Endothelial cell of umbilical vein (primary cell): ENCODE measurements at regions of chr2 and their contacts with region 1.

Region 1: GRCh38 chr2:173210270-173211196 is 134.9 kb downstream of the MAP3K20 start:
- DNase-seq: peak; percentile 87
- H3K4me3 ChIP-seq: no peak overlapping the region
- H3K27ac ChIP-seq: no peak overlapping the region
- H3K4me1 ChIP-seq: no peaks in the 10 kb centered on the region
- H3K27me3 ChIP-seq: no peaks in the 10 kb centered on the region
- CTCF ChIP-seq: peak; percentile 71 to 80
- POLR2A ChIP-seq: no peak

Region 2: GRCh38 chr2:172813314-172813888 is 397.1 kb before region 1 on chr2:
- CTCF ChIA-PET with region 1: interaction called, 21 read pairs
- POLR2A ChIA-PET with region 1: no interaction called
- dilution Hi-C with region 1: no loop called
- intact Hi-C with region 1: no loop called
- DNase-seq: peak; percentile 68
- H3K4me3 ChIP-seq: no peak overlapping the region
- H3K27ac ChIP-seq: no peak overlapping the region
- H3K4me1 ChIP-seq: no peaks in the 10 kb centered on the region
- H3K27me3 ChIP-seq: peaks cover 0 to 2% of the 10 kb centered on the region in 2 experiments
- CTCF ChIP-seq: peak in 1 of 2 donors; percentile 37
- POLR2A ChIP-seq: no peak

Region 3: GRCh38 chr2:173021939-173022371 is 188.6 kb before region 1 on chr2:
- CTCF ChIA-PET with region 1: interaction called, 493 read pairs
- POLR2A ChIA-PET with region 1: no interaction called
- dilution Hi-C with region 1: loop called (anchors 25 kb)
- intact Hi-C with region 1: loop called (anchors 1 kb)
- DNase-seq: peak; percentile 18
- H3K4me3 ChIP-seq: no peak overlapping the region
- H3K27ac ChIP-seq: no peak overlapping the region
- H3K4me1 ChIP-seq: no peaks in the 10 kb centered on the region
- H3K27me3 ChIP-seq: peaks cover 0 to 2% of the 10 kb centered on the region in 2 experiments
- CTCF ChIP-seq: peak; percentile 8 to 23
- POLR2A ChIP-seq: no peak

Region 4: DNA sequence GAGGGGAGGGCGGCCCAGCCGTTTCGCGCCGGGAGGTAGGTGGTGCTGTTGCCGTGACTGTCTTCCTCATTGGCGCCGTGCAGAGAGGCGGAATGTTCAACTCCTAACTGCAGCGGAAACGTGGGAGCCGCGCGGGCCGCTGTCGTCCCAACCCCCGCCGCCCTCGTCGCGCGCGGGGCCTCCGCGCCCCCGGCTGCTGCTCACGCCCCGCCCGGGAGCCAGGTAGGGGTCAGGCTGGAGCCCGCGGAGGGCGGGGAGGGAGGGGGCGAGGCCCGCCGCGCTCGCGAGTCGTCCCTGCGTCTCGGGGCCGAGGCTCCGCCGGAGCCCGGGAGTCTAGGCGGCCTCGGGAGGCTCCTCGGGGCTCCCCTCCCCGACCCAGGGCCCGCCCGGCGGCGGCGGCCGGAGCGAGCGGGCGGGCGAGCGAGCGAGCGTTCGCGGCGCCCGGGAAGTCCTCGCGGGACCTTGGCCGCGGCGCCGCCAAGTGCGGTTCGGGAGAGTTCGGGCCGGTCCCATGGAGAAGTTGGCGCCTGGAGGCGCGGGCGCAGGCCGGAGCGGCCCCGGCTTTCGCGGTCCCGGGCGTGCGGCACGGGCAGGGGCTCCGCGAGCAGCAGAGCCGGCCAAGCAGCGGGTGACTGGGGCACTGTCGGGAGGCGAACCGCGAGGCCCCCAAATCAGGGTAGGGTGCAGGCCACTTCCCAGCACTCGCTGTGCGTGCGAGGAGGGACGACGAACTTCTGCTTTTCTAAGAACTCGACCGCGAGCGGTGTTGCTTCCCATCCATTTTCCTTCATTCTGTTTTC is 134.6 kb before region 1 on chr2 and contains the start of gene MAP3K20:
- CTCF ChIA-PET with region 1: interaction called, 23 read pairs
- POLR2A ChIA-PET with region 1: no interaction called
- dilution Hi-C with region 1: no loop called
- intact Hi-C with region 1: loop called (anchors 1 kb)
- DNase-seq: peak; percentile 70
- H3K4me3 ChIP-seq: peak within 1 kb of the TSS; percentile 54 to 86 (median 56)
- H3K27ac ChIP-seq: peak within 1 kb of the TSS; percentile 78
- H3K4me1 ChIP-seq: peaks cover 15% of the 10 kb centered on the region
- H3K27me3 ChIP-seq: no peaks in the 10 kb centered on the region
- CTCF ChIP-seq: peak; percentile 17 to 48
- POLR2A ChIP-seq: peak; percentile 54
- total RNA-seq, gene MAP3K20: 31.5 and 32.0 TPM in 2 replicates

Region 5: DNA sequence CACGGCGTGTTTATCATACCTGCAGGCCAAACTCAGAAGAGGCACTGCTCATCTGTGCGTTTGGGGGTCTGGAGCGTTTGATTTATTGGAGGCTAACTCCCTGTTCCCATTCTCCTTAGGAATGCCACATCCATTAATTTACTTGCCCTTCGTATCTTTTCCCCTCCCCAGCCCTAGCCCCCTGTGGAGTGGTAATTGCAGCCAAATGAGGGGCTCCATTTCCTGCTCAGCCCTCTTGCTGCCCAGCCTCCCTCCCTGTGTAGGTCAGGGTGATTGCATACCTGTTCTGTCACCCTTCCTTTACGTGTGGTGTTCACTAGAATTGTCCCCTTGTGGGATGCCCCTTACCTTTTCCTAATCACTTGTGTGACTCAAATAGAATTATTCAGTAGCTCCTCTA is 14.5 kb before region 1 on chr2:
- CTCF ChIA-PET with region 1: interaction called, 10 read pairs
- POLR2A ChIA-PET with region 1: no interaction called
- dilution Hi-C with region 1: no loop called
- intact Hi-C with region 1: no loop called
- DNase-seq: no peak
- H3K4me3 ChIP-seq: no peak overlapping the region
- H3K27ac ChIP-seq: no peak overlapping the region
- H3K4me1 ChIP-seq: no peaks in the 10 kb centered on the region
- H3K27me3 ChIP-seq: no peaks in the 10 kb centered on the region
- CTCF ChIP-seq: no peak
- POLR2A ChIP-seq: no peak